CD8-positive, alpha-beta T cell (primary cell): ENCODE measurements at regions of chr12 and their contacts with region 1.

Region 1: GRCh38 chr12:45728630-45729232 is 775 bp upstream of the ARID2 start:
- DNase-seq: peak; percentile 93 to 98 (median 97)
- ATAC-seq: peak; percentile 76
- H3K4me3 ChIP-seq: peak overlapping the region; percentile 85 to 90
- H3K4me3 Mint-ChIP-seq: peak overlapping the region; percentile 96
- H3K27ac ChIP-seq: peak overlapping the region; percentile 90 to 96
- H3K27ac Mint-ChIP-seq: peak overlapping the region; percentile 97
- H3K4me1 ChIP-seq: peaks cover 20% of the 10 kb centered on the region
- H3K4me1 Mint-ChIP-seq: peaks cover 26% of the 10 kb centered on the region
- H3K27me3 ChIP-seq: no peaks in the 10 kb centered on the region
- H3K27me3 Mint-ChIP-seq: no peaks in the 10 kb centered on the region
- CTCF ChIP-seq: peak; percentile 90

Region 2: DNA sequence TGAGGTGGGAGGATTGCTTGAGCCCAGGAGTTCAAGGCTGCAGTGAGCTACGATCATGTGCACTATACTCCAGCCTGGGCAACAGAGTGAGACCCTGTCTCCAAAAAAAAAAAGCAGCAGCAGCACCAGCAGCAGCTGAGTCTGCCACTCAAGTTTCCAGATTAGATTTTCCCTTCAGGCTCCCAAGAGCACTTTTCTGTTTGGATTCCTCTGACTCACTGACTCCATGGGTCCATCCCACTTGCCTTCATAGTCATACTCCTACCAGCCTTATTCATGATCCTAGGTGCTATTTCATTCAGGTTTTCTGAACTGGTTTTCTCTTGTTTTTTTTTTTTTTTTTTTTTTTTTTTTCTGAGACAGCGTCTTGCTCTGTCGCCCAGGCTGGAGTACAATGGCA is 1915.8 kb before region 1 on chr12:
- CTCF ChIA-PET with region 1: no interaction called
- POLR2A ChIA-PET with region 1: no interaction called
- intact Hi-C with region 1: loop called in 1 of 2 experiments (anchors 5 kb)
- DNase-seq: no peak
- ATAC-seq: no peak
- H3K4me3 ChIP-seq: no peak overlapping the region
- H3K4me3 Mint-ChIP-seq: no peak overlapping the region
- H3K27ac ChIP-seq: no peak overlapping the region
- H3K27ac Mint-ChIP-seq: no peak overlapping the region
- H3K4me1 ChIP-seq: peaks cover 6% of the 10 kb centered on the region
- H3K4me1 Mint-ChIP-seq: peaks cover 12% of the 10 kb centered on the region
- H3K27me3 ChIP-seq: no peaks in the 10 kb centered on the region
- H3K27me3 Mint-ChIP-seq: peaks cover 3% of the 10 kb centered on the region
- CTCF ChIP-seq: no peak

Region 3: DNA sequence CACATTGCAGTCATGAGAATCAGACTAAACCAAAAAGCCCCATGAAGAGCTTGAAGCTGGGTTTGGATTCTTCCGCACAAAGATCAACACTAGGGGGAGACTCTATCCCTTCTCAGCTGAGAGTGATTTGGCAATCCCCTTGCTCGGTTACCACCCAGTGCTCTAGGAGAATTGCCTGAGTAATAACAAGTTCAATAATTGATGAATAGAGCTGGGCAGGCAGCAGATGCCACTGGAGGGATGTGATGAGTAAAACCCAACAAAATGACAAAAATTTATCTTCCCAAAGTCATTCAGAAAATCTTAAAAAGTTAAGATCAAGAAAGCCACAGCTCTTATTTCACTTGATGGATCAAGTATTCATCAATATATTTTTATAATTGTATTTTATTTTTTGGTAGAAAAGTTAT is 184.8 kb before region 1 on chr12:
- CTCF ChIA-PET with region 1: interaction called, 35 read pairs
- POLR2A ChIA-PET with region 1: interaction called, 13 read pairs
- intact Hi-C with region 1: loop called in 1 of 2 experiments (anchors 1 kb)
- DNase-seq: peak; percentile 5 to 82 (median 35)
- ATAC-seq: peak; percentile 89
- H3K4me3 ChIP-seq: no peak overlapping the region
- H3K4me3 Mint-ChIP-seq: no peak overlapping the region
- H3K27ac ChIP-seq: no peak overlapping the region
- H3K27ac Mint-ChIP-seq: no peak overlapping the region
- H3K4me1 ChIP-seq: no peaks in the 10 kb centered on the region
- H3K4me1 Mint-ChIP-seq: peaks cover 2% of the 10 kb centered on the region
- H3K27me3 ChIP-seq: no peaks in the 10 kb centered on the region
- H3K27me3 Mint-ChIP-seq: no peaks in the 10 kb centered on the region
- CTCF ChIP-seq: peak; percentile 75

Region 4: DNA sequence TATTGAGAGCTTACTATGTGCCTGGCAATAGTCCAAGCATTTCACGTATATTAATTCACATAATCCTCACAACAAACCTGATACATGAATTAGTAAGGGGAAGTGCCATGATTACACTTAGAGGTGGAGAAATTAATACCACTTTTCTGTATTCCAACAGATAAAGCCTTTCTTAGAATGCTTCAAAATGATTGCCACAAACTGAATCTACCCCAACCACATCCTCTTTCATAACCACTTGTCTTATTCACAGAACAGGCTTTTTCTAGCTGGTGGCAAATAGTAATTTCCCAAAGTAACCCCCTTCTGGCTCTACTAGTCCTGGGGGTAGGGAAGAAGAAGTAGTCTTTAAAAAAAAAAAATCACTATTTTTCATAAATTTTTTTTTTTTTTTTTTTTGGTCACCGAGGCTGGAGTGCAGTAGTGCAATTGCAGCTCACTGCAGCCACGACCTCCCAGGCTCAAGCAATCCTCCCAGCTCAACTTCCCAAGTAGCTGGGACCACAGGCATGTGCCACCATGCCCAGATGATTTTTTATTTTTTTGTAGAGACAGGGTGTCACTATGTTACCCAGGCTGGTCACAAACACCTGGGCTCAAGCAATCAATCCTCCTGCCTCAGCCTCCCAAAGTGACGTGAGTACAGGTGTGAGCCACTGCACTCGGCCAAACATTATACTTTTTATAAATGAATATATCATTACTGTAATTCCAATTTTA is 58.2 kb before region 1 on chr12:
- CTCF ChIA-PET with region 1: interaction called, 14 read pairs
- POLR2A ChIA-PET with region 1: interaction called, 14 read pairs
- intact Hi-C with region 1: no loop called
- DNase-seq: peak in 2 of 9 experiments; percentile 59 to 76
- ATAC-seq: peak; percentile 73
- H3K4me3 ChIP-seq: no peak overlapping the region
- H3K4me3 Mint-ChIP-seq: peak overlapping the region; percentile 15
- H3K27ac ChIP-seq: peak overlapping the region in 1 of 2 experiments; percentile 34
- H3K27ac Mint-ChIP-seq: no peak overlapping the region
- H3K4me1 ChIP-seq: peaks cover 31% of the 10 kb centered on the region
- H3K4me1 Mint-ChIP-seq: peaks cover 29% of the 10 kb centered on the region
- H3K27me3 ChIP-seq: no peaks in the 10 kb centered on the region
- H3K27me3 Mint-ChIP-seq: no peaks in the 10 kb centered on the region
- CTCF ChIP-seq: no peak

Region 5: GRCh38 chr12:45745861-45746277 is 17.1 kb after region 1 on chr12:
- CTCF ChIA-PET with region 1: interaction called, 23 read pairs
- POLR2A ChIA-PET with region 1: interaction called, 44 read pairs
- intact Hi-C with region 1: loop called (anchors 1 to 2 kb)
- DNase-seq: peak in 2 of 9 experiments; percentile 31 to 53
- ATAC-seq: peak; percentile 80
- H3K4me3 ChIP-seq: no peak overlapping the region
- H3K4me3 Mint-ChIP-seq: no peak overlapping the region
- H3K27ac ChIP-seq: no peak overlapping the region
- H3K27ac Mint-ChIP-seq: no peak overlapping the region
- H3K4me1 ChIP-seq: peaks cover 6% of the 10 kb centered on the region
- H3K4me1 Mint-ChIP-seq: peaks cover 66% of the 10 kb centered on the region
- H3K27me3 ChIP-seq: no peaks in the 10 kb centered on the region
- H3K27me3 Mint-ChIP-seq: no peaks in the 10 kb centered on the region
- CTCF ChIP-seq: peak; percentile 57

Region 6: GRCh38 chr12:46209914-46210872 is 481.5 kb after region 1 on chr12:
- CTCF ChIA-PET with region 1: no interaction called
- POLR2A ChIA-PET with region 1: no interaction called
- intact Hi-C with region 1: loop called in 1 of 2 experiments (anchors 10 kb)
- DNase-seq: peak in 8 of 9 experiments; percentile 39 to 84 (median 66)
- ATAC-seq: peak; percentile 63
- H3K4me3 ChIP-seq: no peak overlapping the region
- H3K4me3 Mint-ChIP-seq: peak overlapping the region; percentile 69
- H3K27ac ChIP-seq: peak overlapping the region; percentile 38 to 83
- H3K27ac Mint-ChIP-seq: peak overlapping the region; percentile 94
- H3K4me1 ChIP-seq: peaks cover 85% of the 10 kb centered on the region
- H3K4me1 Mint-ChIP-seq: peaks cover 95% of the 10 kb centered on the region
- H3K27me3 ChIP-seq: no peaks in the 10 kb centered on the region
- H3K27me3 Mint-ChIP-seq: no peaks in the 10 kb centered on the region
- CTCF ChIP-seq: no peak

Region 7: GRCh38 chr12:47102845-47103651 is 1374.3 kb after region 1 on chr12:
- CTCF ChIA-PET with region 1: no interaction called
- POLR2A ChIA-PET with region 1: no interaction called
- intact Hi-C with region 1: no loop called
- DNase-seq: no peak
- ATAC-seq: no peak
- H3K4me3 ChIP-seq: no peak overlapping the region
- H3K4me3 Mint-ChIP-seq: no peak overlapping the region
- H3K27ac ChIP-seq: no peak overlapping the region
- H3K27ac Mint-ChIP-seq: no peak overlapping the region
- H3K4me1 ChIP-seq: no peaks in the 10 kb centered on the region
- H3K4me1 Mint-ChIP-seq: no peaks in the 10 kb centered on the region
- H3K27me3 ChIP-seq: no peaks in the 10 kb centered on the region
- H3K27me3 Mint-ChIP-seq: no peaks in the 10 kb centered on the region
- CTCF ChIP-seq: no peak